Activated naive CD4-positive, alpha-beta T cell treated with anti-CD3 and anti-CD28 coated beads for 36 hours (primary cell): ENCODE measurements at regions of chr11 and their contacts with region 1.

Region 1: DNA sequence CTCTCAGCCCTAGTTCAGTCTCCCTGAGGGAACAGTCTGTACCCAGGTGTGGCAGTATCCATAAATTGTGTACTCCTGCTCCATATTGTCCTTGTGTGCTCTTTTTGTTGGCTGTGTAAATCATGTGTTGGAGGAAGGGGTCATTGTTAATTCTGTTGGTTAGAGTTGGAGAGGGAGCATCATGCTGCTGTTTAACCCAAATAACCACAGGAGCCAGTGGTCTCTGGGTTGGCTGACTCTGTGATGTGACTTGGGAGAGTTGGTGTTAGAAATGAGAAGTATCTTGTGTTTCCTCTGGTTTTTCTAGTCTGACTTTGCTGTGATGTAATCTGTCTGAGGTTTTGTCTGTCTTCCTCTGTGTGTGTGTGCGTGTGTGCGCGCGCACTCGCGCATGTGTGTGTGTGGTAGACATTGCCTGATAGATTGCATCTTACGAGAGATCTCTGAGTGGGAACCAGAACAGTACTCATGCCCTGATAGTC is 30.5 kb downstream of the CTNND1 start:
- DNase-seq: peak; percentile 87
- H3K4me3 Mint-ChIP-seq: peak overlapping the region; percentile 59
- H3K27ac Mint-ChIP-seq: peak overlapping the region; percentile 94
- H3K4me1 Mint-ChIP-seq: peaks cover 34% of the 10 kb centered on the region
- H3K27me3 Mint-ChIP-seq: no peaks in the 10 kb centered on the region

Region 2: DNA sequence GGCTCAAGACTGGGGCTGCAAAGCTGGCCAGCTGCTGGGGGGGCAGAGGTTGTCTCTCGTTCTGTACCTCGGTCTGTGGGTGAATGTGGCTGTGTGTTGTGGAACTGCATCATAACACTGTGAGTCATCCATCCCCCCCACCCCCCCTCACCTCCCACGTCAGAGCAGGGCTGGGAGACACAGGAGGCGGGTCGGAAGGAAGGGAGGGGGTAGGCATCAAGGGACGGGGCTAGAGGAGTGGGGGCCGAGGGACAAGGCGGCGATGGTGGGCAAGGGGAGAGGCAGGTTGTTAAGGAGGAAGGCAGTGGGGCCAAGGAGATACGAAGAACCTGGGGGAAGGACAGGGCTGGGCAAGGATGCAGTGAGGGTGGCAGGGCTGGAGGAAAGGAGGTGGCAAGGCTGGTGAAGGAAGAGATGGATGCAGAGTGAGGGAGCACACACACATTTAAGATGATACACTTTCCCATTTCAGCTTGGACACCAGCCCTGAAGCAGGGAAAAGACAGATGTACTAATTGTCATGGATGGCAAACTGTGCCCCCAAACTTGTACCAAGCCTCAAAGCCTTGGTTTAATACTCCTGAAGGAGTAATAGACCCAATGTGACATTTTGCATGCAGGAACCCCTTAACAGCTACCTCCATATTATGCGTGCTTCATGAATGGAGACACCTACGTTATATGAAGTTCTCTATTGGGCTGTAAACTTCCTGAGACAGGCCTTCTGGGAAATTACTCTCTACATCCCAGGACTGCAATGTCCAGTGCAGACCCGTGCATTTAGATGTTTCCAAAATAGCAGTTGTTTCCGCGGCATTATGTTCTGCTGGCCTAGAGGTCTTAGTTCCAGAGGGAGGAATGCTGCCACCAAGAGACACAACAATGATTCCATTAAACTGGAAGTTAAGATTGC is 142.0 kb before region 1 on chr11 and contains the start of gene YPEL4:
- CTCF ChIA-PET with region 1: interaction called, 3 read pairs
- intact Hi-C with region 1: loop called (anchors 2 kb)
- DNase-seq: peak; percentile 70
- H3K4me3 Mint-ChIP-seq: peak within 1 kb of the TSS; percentile 75
- H3K27ac Mint-ChIP-seq: no peak within 1 kb of the TSS
- H3K4me1 Mint-ChIP-seq: peaks cover 38% of the 10 kb centered on the region
- H3K27me3 Mint-ChIP-seq: peaks cover 37% of the 10 kb centered on the region
- total RNA-seq, gene YPEL4: 0.17 to 0.54 TPM

Region 3: DNA sequence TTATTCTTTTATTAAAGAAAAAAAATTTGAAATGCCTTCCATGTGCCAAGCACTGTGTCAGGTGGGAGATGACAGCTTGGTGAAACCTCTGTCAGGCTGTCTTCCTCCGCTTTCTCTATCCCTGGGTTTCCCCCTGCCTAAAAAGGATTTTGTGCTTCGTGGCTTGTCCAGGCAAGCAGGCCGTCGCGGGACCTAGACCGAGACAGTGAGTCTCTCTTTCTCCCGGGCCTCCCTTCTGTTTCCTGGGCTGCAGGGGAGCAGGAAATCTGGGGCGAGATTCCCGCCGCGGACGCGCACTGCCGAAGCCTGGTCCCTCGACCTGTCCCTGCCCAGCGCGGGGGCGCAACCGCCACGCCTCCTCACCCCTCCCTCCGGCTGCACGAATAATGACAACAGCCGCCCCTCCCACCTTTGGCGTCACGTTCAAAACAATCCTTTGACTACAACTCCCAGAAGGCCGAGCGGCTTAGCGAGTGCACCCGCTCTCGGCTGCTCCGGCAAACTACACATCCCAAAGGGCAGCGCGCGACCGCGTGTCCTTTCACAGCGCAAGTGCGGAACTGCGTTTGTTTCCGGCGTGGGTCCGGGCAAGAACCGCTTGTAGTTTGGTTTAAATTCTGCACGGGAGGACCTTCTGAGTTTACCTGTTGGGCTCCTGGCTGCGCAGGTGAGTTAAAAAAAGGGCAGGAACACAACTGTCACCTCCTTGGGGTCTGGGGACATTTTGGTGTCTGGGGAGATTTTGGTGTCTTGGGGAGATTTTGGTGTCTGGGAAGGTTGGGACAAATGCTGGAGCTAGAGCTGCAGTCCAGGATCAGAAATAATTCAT is 134.7 kb before region 1 on chr11 and contains the start of gene CLP1:
- CTCF ChIA-PET with region 1: no interaction called
- intact Hi-C with region 1: loop called (anchors 2 kb)
- DNase-seq: peak; percentile 100
- H3K4me3 Mint-ChIP-seq: peak within 1 kb of the TSS; percentile 92
- H3K27ac Mint-ChIP-seq: peak within 1 kb of the TSS; percentile 90
- H3K4me1 Mint-ChIP-seq: peaks cover 34% of the 10 kb centered on the region
- H3K27me3 Mint-ChIP-seq: no peaks in the 10 kb centered on the region
- total RNA-seq, gene CLP1: 11.3 to 14.2 TPM

Region 4: GRCh38 chr11:57712256-57713150 is 79.6 kb before region 1 on chr11 and contains the start of gene TMX2:
- CTCF ChIA-PET with region 1: no interaction called
- intact Hi-C with region 1: loop called (anchors 2 kb)
- DNase-seq: peak; percentile 95
- H3K4me3 Mint-ChIP-seq: peak within 1 kb of the TSS; percentile 99
- H3K27ac Mint-ChIP-seq: peak within 1 kb of the TSS; percentile 92
- H3K4me1 Mint-ChIP-seq: peaks cover 50% of the 10 kb centered on the region
- H3K27me3 Mint-ChIP-seq: no peaks in the 10 kb centered on the region
- total RNA-seq, gene TMX2: 49.8 to 54.7 TPM

Region 5: GRCh38 chr11:57761301-57762234 is 30.5 kb before region 1 on chr11 and contains the start of gene CTNND1:
- CTCF ChIA-PET with region 1: interaction called, 6 read pairs
- intact Hi-C with region 1: loop called (anchors 1 kb)
- DNase-seq: peak; percentile 33
- H3K4me3 Mint-ChIP-seq: peak within 1 kb of the TSS; percentile 74
- H3K27ac Mint-ChIP-seq: peak within 1 kb of the TSS; percentile 6
- H3K4me1 Mint-ChIP-seq: peaks cover 29% of the 10 kb centered on the region
- H3K27me3 Mint-ChIP-seq: no peaks in the 10 kb centered on the region
- total RNA-seq, gene CTNND1: 5.5 to 8.5 TPM